ENCODE measurements at regions of chr15 and their contacts with region 1.

Region 1: DNA sequence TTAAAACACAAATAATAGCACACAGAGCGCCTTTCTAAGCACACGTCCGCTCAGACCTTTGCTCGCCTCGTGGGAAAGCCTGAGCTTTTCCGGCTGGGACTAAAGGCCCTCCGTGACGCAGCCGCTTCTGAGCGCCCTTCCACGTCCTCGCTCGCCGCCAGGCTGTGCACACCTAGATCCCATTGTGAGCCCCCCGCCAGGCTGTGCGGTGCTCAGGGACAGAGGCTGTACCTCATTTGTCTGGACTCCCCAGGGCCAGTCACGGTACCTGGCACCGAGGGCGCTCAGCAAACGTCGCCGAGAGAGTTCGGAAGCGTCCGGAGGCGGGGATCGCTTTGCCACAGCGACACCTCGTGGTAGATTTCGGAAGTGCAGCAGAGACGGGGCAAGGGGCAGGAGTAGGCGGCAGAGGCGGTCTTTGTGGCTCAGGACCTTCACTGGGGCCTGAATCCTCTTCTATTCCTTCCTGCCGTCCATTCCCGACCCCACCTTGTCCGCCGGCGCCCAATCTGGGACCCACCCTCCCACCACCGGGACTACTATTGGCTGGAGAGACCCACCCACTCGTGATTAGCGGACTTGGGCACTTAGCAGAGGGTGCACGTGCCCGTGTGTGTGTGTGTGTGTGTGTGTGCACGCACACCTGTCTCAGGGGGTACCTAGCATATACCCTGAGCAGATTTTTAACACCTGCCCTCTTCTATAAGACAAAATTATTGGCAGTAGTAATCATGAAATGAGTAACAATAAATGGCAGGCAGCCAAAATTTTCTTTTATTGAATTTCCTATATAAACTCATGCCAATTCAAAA is 65.6 kb downstream of the RHCG start:
- ATAC-seq: peak; percentile 80 to 98 (median 90)
- H3K4me3 ChIP-seq: peak overlapping the region; percentile 26 to 39 (median 28)
- H3K27ac ChIP-seq: no peak overlapping the region
- H3K4me1 ChIP-seq: peaks cover 2 to 9% of the 10 kb centered on the region in 2 donors

Region 2: GRCh38 chr15:89346516-89347231 is 84.1 kb before region 1 on chr15:
- in situ Hi-C with region 1: loop called in 1 of 9 experiments (anchors 10 kb)
- ATAC-seq: peak in 6 of 8 experiments; percentile 22 to 60 (median 40)
- H3K4me3 ChIP-seq: no peak overlapping the region
- H3K27ac ChIP-seq: no peak overlapping the region
- H3K4me1 ChIP-seq: no peaks in the 10 kb centered on the region

Region 3: GRCh38 chr15:89358755-89359439 is 71.8 kb before region 1 on chr15:
- in situ Hi-C with region 1: loop called in 1 of 9 experiments (anchors 10 kb)
- ATAC-seq: peak; percentile 58 to 88 (median 70)
- H3K4me3 ChIP-seq: peak overlapping the region; percentile 42 to 90 (median 50)
- H3K27ac ChIP-seq: no peak overlapping the region
- H3K4me1 ChIP-seq: peaks cover 23 to 37% of the 10 kb centered on the region in 2 donors

Measured in motor neuron (in vitro differentiated cells).